ENCODE measurements at regions of chr2 and their contacts with region 1.

Region 1: DNA sequence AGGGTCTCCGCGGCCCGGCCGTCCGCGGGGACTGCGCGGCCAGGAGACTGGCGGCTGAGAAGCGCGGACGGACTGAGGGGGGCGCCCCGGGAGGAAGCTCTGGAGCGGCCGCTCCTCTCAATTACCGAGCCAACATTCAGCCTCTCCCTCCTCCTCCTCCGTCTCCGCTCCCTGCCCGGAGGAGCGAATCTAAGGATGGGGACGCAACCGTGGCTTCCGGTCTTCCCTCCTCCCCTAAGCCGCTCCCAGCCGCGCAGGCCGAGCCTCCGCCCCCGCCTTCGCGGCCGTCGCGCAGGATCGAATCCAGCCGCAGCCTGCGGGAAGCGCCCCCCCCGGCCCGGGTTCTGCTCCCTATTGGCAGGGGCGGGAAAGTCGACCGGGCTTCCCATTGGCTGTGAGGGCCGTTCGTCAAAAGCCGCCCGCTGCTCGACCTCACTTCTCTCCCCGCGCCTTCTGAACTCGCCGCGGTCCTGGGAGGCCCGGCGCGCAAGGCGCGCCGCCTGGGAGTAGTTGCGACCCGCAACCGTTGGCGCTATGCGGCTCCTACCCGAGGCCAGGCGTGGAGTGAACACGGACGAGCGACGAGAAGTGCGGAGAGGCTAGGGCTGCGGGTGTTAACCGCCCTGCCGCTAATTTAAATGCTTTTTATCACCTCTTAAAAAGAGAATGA is at the start of gene HNRNPLL:
- DNase-seq: peak; percentile 92 to 98 (median 96)
- H3K4me3 ChIP-seq: peak within 1 kb of the TSS; percentile 69 to 99 (median 91)
- H3K27ac ChIP-seq: peak within 1 kb of the TSS; percentile 67 to 99 (median 96)
- H3K27me3 ChIP-seq: no peaks in the 10 kb centered on the region
- CTCF ChIP-seq: peak in 13 of 56 donors; percentile 11 to 30 (median 22)
- total RNA-seq, gene HNRNPLL: 43.5 to 94.0 (median 69.3) TPM

Region 2: DNA sequence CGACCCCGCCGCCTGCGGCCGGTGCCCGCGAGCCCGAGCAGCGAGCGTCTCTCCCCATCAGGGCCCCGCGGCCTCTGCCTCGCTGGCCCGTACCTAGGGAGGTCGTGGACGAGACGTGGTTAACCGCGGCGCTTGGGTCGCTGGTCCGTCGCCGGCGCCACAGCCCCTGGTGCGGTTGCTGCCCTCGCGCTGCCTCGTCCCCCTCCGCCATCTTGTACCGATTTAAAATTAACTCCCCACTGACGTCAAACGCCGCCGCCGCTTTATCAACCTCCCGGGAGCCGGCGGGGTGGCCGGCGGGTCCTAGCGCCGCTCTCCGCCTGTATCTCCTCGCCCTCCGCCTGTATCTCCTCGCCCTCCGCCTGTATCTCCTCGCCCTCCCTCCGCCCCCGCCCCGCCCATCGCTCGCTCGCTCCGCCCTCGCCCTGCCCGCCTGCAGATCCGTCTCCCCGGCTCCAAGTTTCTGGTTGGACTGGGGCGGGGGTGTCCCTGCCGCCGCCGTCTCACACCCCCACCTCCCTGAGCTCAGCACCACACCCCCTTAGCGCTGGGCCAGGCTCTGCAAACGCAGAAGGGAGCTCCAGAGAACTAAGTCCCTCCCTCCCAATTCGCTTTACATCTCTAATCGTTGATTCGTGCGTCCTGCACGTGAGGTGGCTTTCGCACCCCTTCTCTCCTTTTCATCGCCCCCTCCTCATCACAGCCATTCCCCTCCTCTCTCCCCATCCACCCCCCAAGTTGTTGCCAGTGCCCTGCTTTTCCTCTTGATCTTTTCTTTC is 225.6 kb before region 1 on chr2 and contains the start of gene ATL2:
- intact Hi-C with region 1: loop called (anchors 2 to 5 kb)
- DNase-seq: peak; percentile 89 to 96 (median 95)
- H3K4me3 ChIP-seq: peak within 1 kb of the TSS; percentile 78 to 98 (median 90)
- H3K27ac ChIP-seq: peak within 1 kb of the TSS; percentile 65 to 98 (median 93)
- H3K27me3 ChIP-seq: no peaks in the 10 kb centered on the region
- CTCF ChIP-seq: peak in 11 of 56 donors; percentile 9 to 46 (median 20)
- total RNA-seq, gene ATL2: 36.1 to 104 (median 69.2) TPM

Region 3: DNA sequence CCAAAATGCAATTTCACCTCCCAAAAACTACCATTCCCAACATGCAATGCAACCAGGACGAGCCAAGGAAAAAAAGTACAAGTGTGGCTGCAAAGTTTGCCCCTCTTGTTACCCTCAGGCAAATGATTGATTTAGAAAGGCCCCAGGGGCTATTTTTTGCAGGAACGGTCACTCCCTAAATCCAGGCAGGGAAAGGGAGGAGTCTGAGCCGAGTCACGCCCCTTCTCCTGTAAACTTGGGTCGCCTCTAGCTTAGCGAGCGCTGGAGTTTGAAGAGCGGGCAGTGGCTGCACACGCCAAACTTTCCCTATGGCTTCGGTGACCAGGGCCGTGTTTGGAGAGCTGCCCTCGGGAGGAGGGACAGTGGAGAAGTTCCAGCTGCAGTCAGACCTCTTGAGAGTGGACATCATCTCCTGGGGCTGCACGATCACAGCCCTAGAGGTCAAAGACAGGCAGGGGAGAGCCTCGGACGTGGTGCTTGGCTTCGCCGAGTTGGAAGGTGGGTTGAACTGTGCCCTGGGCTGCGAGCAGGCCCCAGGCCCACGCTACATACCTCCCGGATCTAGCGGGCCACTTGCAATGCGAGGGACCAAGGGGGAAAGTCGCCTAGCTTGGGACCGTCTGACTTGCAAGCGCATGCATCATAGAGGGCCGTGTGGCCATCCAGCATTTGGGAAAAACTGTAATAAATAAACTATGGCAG is 63.1 kb after region 1 on chr2 and contains the start of gene GALM:
- intact Hi-C with region 1: loop called (anchors 2 kb)
- DNase-seq: peak in 6 of 10 donors; percentile 26 to 55 (median 34)
- H3K4me3 ChIP-seq: peak within 1 kb of the TSS; percentile 40 to 81 (median 65)
- H3K27ac ChIP-seq: peak within 1 kb of the TSS in 56 of 59 donors; percentile 2 to 82 (median 59)
- H3K27me3 ChIP-seq: no peaks in the 10 kb centered on the region
- CTCF ChIP-seq: peak in 3 of 56 donors; percentile 11 to 29 (median 16)
- total RNA-seq, gene GALM: 2.0 to 13.3 (median 4.5) TPM

Region 4: DNA sequence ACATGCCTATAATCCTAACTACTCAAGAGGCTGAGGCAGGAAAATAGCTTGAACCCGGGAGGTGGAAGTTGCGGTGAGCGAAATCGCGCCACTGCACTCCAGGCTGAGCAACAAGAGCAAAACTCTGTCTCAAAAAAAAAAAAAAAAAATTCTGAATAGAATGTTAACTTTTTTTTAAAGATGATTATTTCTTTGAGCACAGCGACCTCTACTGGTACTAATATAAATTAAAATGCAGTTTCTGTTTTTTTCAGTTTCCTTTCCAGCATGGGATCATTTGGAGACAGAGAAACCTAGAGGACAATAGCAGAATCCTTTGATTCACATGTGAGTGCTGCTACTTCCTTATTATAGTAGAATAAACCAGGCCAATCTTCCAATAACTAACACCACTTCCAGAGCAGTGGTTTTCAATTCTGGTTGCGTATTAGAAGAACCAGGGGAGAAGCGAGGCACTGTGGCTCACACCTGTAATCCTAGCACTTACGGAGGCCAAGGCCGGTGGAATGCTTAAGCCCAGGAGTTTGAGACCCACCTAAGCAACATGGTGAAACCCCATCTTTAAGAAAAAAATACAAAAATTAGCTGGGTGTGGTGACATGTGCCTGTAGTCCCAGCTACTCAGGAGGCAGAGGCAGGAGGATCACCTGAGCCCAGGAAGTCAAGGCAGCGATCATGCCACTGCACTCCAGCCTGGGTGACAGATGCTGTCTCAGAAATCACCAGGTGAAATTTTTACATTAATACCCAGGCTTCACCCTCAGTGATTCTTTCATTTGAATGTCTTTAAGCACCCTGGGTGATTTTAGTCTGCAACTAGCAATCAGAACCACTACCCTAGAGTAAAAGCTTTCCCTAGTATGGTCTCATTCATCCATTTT is 138.2 kb after region 1 on chr2:
- intact Hi-C with region 1: loop called in 1 of 2 experiments (anchors 5 kb)
- DNase-seq: no peak
- H3K4me3 ChIP-seq: peak overlapping the region in 9 of 59 donors; percentile 1 to 36 (median 12)
- H3K27ac ChIP-seq: peak overlapping the region in 25 of 59 donors; percentile 2 to 71 (median 37)
- H3K27me3 ChIP-seq: no peaks in the 10 kb centered on the region
- CTCF ChIP-seq: peak; percentile 52 to 93 (median 74)

Measured in dorsolateral prefrontal cortex (tissue), 120 donors.